Activated T-helper 2 cell treated with anti-CD3 and anti-CD28 coated beads, Interferon-gamma antibody, Interleukin-2, Interleukin-4, amounts not matched to agents 10 μg/mL and 5 μg/mL and 100 μg/mL, durations not matched to agents 14 hours and 24 hours and 36 hours (primary cell): ENCODE measurements at regions of chr2 and their contacts with region 1.

Region 1: GRCh38 chr2:96960153-96960961 is 26.0 kb downstream of the FAM178B start:
- DNase-seq: peak; percentile 72
- H3K4me3 Mint-ChIP-seq: no peak overlapping the region
- H3K27ac Mint-ChIP-seq: peak overlapping the region; percentile 88
- H3K4me1 Mint-ChIP-seq: peaks cover 56% of the 10 kb centered on the region
- H3K27me3 Mint-ChIP-seq: no peaks in the 10 kb centered on the region

Region 2: DNA sequence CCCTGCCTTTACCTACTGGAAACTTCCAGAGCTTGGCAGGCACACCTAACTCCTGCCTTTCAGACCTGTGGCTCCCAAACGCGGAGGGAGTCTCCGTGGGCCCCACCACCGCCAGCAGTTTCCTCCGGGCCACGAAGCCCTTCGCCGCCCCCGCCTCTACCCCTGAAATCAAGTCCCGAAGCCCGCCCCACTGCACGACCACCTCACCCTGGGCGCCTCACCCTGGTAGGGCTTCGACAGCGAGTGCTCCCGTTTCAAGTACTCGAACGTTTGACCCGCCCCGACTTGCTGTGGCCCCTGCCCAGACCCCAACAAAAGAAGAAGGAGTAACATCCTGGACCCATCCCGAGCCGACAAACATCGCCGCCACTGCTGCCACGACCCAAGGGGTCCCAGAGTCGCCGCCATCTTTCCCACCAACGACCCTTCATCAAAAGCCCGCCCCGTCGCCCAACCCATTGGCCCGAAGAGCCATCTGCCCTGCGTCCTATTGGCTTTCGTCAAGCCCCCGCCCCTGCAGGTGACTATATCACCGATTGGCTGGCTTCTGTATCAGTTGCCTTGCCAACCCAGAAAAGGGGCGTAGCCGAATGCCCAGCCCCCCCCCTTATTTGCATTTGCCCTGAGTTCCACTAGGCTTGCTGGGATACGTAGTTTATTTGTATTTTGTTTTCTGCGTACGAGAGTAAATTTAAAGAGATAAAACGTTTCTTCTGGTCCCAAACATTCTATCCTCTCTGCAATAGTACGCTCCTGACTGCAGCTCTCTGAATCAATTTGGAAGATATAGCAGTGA is 220.5 kb before region 1 on chr2 and contains the start of gene LMAN2L:
- intact Hi-C with region 1: loop called (anchors 5 kb)
- DNase-seq: peak; percentile 95
- H3K4me3 Mint-ChIP-seq: peak within 1 kb of the TSS; percentile 92
- H3K27ac Mint-ChIP-seq: peak within 1 kb of the TSS; percentile 71
- H3K4me1 Mint-ChIP-seq: peaks cover 20% of the 10 kb centered on the region
- H3K27me3 Mint-ChIP-seq: peaks cover 2% of the 10 kb centered on the region
- total RNA-seq, gene LMAN2L: 6.0 and 7.0 TPM in 2 replicates

Region 3: DNA sequence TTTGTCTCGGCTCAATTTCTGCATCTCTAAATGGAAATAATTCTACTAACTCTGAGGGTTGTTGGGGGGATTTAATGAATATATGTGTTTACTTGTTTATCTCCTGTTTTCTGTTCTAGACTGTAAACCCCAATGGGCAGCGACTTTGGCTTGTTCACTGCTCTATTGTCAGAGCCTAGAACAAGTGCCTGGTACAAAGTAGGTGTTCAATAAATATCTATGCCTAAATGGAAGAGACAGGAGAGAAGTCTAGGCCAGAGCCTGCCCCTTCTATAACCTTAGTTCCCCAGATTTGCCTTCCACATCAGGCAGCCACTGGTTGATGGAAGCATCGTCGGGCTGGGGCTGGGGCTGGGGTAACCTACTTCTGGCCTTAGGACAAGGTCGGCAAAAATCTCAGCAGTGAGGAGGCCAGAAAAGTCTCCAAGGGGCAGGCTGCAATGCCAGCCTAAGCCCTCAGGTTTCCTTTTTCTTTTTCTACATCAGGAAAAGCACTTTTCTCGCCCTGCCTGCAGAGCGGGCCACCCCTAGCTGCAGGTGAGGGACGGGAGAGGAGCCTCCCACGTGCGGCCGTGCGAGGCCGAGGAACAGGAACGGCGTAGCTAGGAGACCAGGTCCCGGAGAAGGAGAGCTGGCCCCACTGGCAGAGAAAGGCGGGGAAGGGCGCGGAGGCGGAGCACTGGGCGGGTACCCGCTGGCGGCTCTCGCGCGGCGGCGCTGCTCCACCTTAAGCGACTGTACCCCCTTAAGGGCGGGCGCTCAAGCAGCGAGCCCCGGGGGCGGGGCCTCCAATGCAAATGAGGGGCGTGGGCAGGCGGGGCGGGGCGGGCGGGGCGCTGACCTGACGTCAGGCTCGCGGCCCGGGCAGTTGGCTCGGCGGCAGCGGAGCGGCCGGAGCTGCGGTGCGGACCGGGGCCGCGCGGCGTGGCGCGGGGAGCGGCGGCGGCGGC is 200.0 kb before region 1 on chr2 and contains the start of gene CNNM4:
- intact Hi-C with region 1: loop called (anchors 5 kb)
- DNase-seq: peak; percentile 88
- H3K4me3 Mint-ChIP-seq: peak within 1 kb of the TSS; percentile 80
- H3K27ac Mint-ChIP-seq: peak within 1 kb of the TSS; percentile 79
- H3K4me1 Mint-ChIP-seq: peaks cover 44% of the 10 kb centered on the region
- H3K27me3 Mint-ChIP-seq: no peaks in the 10 kb centered on the region
- total RNA-seq, gene CNNM4: 10.1 and 11.3 TPM in 2 replicates

Region 4: DNA sequence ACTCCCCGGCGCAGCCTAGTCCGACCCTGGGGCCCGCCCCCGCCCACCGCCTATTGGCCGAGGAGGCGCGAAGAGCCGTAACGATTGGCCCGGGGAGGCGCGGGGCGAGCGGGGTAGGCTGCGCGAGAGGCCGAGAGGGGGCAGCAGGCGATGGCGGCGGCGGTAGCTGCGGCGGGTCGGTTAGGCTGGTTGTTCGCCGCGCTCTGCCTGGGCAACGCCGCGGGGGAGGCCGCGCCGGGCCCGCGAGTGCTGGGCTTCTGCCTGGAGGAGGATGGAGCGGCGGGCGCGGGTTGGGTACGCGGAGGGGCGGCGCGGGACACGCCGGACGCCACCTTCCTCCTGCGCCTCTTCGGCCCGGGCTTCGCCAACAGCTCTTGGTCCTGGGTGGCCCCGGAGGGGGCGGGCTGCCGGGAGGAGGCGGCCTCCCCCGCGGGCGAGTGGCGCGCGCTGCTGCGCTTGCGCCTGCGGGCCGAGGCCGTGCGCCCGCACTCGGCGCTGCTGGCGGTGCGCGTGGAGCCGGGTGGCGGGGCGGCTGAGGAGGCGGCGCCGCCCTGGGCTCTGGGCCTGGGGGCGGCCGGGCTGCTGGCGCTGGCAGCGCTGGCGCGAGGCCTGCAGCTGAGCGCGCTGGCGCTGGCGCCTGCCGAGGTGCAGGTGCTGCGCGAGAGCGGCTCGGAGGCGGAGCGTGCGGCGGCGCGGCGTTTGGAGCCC is 144.1 kb before region 1 on chr2 and contains the start of gene CNNM3:
- intact Hi-C with region 1: loop called (anchors 5 kb)
- DNase-seq: peak; percentile 95
- H3K4me3 Mint-ChIP-seq: peak within 1 kb of the TSS; percentile 84
- H3K27ac Mint-ChIP-seq: peak within 1 kb of the TSS; percentile 70
- H3K4me1 Mint-ChIP-seq: peaks cover 41% of the 10 kb centered on the region
- H3K27me3 Mint-ChIP-seq: no peaks in the 10 kb centered on the region
- total RNA-seq, gene CNNM3: 28.7 and 30.4 TPM in 2 replicates

Region 5: DNA sequence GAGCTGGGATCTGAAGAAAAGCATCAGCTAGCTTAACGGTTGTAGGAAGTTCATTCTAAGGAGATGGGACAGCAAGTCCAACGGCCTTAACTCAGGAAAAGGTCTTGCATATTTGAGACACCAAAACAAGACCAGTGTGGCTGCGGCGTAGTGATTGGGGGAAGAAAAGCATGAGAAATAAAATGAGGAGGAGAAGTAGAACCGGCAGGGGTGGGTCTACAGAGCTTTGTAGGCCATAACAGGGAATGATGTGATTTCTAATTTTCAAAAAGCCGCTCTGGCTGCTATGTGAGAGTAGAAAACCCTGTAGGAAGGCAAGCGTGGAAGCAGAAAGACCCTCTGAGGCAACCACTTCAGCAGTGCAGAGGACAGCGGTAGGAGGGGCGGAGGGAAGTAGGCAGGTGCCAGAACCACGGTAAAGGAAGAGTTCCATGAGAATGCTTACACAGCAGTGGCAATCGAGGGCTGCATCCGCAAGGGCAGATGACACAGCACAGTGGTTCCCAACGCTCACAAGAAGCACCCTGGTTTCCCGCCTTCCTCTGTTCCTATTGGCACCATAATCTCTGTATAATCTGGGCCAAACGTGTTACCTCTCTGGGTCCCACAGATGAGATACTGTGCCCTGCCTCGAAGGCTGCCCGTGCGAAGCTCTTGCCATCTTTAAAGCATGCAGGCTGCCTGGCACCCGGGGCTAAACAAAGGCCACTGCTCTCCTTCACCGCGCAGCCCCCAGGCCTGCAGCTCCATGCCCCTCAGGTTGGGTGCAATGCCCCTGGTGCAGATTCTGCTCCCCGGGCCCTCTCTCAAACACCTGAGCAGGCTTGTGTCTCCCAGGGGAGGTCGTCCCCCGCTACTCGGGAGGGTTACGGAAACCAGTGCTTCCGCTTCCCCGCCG is 103.3 kb before region 1 on chr2:
- intact Hi-C with region 1: loop called (anchors 1 kb)
- DNase-seq: no peak
- H3K4me3 Mint-ChIP-seq: peak overlapping the region; percentile 90
- H3K27ac Mint-ChIP-seq: peak overlapping the region; percentile 82
- H3K4me1 Mint-ChIP-seq: peaks cover 24% of the 10 kb centered on the region
- H3K27me3 Mint-ChIP-seq: no peaks in the 10 kb centered on the region

Region 6: DNA sequence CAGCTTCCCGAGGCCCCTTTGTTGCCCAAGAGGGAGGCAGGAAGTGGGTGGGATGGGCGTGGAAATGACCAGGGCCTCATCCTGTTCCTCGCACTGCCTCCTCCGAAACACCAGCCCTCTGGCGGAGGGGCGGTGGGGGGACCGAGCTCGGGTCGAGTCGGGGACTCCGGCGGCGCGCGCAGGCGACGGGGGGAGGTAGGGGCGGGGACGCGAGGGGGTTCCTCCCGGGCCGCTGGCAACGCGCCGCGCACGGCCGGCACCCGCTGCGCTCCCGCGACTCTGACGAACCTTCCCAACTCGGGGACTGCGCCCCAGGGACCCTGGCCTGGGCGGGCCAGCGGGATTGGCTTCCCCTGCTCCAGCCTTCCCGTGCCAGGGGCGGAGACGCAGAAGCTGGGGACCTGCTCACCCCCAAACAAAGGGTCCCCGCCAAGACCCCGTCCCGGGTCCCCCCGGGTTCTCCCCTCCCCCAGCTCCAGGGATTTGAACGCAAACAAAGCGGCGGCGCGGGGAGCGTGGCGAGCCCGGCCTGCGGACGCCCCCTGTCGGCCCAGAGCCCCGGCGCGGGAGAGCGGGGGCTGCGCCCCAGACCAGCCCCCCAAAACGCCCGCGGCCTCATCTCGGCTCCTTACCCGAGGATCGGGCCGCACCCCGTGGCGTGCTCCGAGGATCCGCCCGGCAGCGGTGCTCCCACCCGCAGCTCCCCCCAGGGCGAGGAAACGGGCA is 91.6 kb before region 1 on chr2:
- intact Hi-C with region 1: loop called (anchors 5 kb)
- DNase-seq: peak; percentile 62
- H3K4me3 Mint-ChIP-seq: peak overlapping the region; percentile 84
- H3K27ac Mint-ChIP-seq: peak overlapping the region; percentile 77
- H3K4me1 Mint-ChIP-seq: peaks cover 19% of the 10 kb centered on the region
- H3K27me3 Mint-ChIP-seq: peaks cover 6% of the 10 kb centered on the region